AG04450 (cell line): ENCODE measurements at regions of chr17 and their contacts with region 1.

Region 1: DNA sequence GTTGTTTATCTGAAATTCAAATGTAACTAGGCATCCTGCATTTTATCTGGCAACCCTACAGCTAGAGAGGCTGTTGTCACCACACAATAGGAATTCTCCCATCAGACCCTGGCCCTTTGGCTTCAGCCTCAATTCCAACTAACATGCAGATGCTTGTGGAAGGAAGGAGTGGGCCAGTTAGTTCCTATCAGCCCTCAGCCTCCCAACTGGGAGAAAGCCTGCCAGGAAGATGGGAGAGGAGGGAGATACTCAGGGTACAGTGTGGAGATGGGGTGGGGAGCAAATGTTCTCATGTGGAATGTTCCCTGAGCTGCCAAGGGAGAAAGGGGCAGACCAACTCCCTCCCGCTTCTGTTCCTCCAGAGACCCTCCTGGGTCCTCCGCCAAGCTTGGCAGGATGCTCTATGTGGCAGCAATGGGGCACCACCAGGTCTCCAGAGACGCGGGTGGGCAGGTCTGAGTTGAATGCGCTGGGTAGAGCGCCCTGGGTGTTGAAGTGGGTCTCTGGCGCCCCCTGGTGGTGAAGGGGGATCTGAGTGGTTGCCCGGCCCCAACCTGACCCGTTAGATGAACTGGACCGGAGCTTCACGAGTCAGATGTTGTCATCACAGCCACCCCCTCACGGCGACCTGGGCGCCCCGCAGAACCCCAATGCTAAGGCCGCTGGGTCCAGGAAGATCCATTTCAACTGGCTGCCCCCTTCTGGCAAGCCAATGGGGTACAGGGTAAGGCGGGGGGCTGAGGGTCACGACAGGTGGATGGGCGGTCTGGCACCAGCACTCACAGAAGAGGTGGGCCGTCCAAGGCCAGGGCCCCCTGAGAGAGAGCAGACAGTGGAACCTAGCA is 15.2 kb downstream of the GALK1 start:
- DNase-seq: no peak
- H3K4me3 ChIP-seq: 0 out of 2 replicates have a peak overlapping the region, but pooled peaks have one; percentile 10
- H3K27ac ChIP-seq: no peak overlapping the region
- H3K27me3 ChIP-seq: peaks cover 3% of the 10 kb centered on the region
- CTCF ChIP-seq: peak; percentile 87

Region 2: GRCh38 chr17:75460936-75461335 is 288.8 kb before region 1 on chr17:
- CTCF ChIA-PET with region 1: interaction called, 15 read pairs
- POLR2A ChIA-PET with region 1: no interaction called
- DNase-seq: no peak
- H3K4me3 ChIP-seq: no peak overlapping the region
- H3K27ac ChIP-seq: no peak overlapping the region
- H3K27me3 ChIP-seq: no peaks in the 10 kb centered on the region
- CTCF ChIP-seq: no peak

Region 3: DNA sequence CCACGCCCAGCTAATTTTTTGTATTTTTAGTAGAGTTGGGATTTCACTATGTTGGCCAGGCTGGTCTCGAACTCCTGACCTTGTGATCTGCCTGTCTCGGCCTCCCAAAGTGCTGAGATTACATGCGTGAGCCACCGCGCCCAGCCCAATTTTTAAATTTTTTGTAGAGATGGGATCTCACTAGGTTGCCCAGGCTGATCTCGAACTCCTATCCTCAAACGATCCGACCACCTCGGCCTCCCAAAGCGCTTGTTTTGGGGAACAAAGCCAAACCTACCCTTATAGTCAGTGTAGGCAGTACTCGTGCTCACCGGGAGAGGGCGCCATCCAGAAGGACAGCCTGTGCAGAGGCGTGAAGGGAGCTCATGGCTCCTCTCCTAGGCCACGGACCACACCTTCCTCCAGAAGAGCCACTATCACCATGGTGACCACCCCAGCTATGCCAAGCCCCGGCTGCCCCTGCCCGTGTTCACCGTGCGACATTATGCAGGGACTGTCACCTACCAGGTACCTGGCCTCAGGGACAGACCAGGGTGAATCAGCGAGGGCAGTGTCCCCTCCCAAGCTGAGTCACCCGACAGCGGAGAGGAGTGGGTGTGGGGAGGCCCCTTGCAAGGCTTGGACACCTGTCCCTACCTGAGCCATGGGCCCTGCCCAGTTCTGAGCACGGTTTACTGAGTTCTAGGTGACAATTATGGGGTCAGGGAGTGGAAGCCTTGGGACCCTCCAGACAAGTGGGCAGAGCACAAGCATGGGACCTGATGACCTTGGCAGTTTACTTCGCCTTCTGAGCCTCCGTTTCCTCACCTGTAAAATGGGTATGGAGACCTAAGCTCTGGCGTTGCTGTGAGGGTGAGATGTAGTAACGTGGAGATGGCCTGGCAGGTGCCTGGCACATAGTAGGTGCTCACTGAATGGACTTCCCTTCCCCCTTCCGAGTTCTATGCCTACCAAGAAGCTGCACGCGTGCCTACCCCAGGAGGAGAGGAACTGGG is 148.4 kb before region 1 on chr17:
- CTCF ChIA-PET with region 1: interaction called, 14 read pairs
- POLR2A ChIA-PET with region 1: no interaction called
- DNase-seq: no peak
- H3K4me3 ChIP-seq: no peak overlapping the region
- H3K27ac ChIP-seq: no peak overlapping the region
- H3K27me3 ChIP-seq: peaks cover 2% of the 10 kb centered on the region
- CTCF ChIP-seq: peak; percentile 58

Region 4: GRCh38 chr17:75645189-75645888 is 104.4 kb before region 1 on chr17:
- CTCF ChIA-PET with region 1: interaction called, 10 read pairs
- POLR2A ChIA-PET with region 1: no interaction called
- DNase-seq: no peak
- H3K4me3 ChIP-seq: no peak overlapping the region
- H3K27ac ChIP-seq: no peak overlapping the region
- H3K27me3 ChIP-seq: no peaks in the 10 kb centered on the region
- CTCF ChIP-seq: no peak

Region 5: GRCh38 chr17:75673487-75673886 is 76.3 kb before region 1 on chr17:
- CTCF ChIA-PET with region 1: interaction called, 214 read pairs
- POLR2A ChIA-PET with region 1: no interaction called
- DNase-seq: no peak
- H3K4me3 ChIP-seq: no peak overlapping the region
- H3K27ac ChIP-seq: no peak overlapping the region
- H3K27me3 ChIP-seq: no peaks in the 10 kb centered on the region
- CTCF ChIP-seq: no peak

Region 6: DNA sequence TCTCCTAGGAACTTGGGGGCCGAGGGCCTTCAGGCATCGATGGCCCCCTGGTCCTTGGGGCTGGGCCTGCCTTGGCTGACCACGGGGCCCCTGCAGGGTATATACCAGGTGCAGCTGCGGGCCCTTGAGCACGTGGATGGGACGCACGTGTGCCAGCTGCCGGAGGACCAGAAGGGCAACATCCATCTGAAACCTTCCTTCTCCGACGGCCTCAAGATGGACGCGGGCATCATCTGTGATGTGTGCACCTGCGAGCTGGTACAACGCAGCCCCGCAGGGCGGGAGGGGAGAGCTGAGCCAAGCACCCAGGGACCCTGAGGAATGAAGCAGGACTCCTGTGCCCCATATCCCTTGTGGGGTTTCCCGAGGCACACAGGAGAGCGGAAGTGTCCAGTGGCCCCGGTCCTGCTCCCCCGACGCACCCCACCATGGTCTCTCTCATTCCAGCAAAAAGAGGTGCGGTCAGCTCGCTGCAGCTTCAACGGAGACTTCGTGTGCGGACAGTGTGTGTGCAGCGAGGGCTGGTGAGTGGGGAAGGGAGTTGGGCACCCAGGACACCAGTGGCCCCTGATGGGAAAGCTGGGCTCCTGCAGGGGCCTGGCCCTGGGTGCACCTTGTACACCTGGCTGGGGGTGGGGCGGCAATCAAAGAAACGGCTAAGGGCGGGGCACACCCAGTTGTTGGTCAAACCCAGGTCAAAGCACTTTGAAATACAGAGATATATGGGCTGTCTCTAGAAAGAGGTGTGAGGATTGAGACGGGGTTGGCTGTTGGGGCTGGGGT is 17.9 kb before region 1 on chr17:
- CTCF ChIA-PET with region 1: interaction called, 23 read pairs
- POLR2A ChIA-PET with region 1: no interaction called
- DNase-seq: no peak
- H3K4me3 ChIP-seq: no peak overlapping the region
- H3K27ac ChIP-seq: no peak overlapping the region
- H3K27me3 ChIP-seq: peaks cover 12% of the 10 kb centered on the region
- CTCF ChIP-seq: no peak

Region 7: DNA sequence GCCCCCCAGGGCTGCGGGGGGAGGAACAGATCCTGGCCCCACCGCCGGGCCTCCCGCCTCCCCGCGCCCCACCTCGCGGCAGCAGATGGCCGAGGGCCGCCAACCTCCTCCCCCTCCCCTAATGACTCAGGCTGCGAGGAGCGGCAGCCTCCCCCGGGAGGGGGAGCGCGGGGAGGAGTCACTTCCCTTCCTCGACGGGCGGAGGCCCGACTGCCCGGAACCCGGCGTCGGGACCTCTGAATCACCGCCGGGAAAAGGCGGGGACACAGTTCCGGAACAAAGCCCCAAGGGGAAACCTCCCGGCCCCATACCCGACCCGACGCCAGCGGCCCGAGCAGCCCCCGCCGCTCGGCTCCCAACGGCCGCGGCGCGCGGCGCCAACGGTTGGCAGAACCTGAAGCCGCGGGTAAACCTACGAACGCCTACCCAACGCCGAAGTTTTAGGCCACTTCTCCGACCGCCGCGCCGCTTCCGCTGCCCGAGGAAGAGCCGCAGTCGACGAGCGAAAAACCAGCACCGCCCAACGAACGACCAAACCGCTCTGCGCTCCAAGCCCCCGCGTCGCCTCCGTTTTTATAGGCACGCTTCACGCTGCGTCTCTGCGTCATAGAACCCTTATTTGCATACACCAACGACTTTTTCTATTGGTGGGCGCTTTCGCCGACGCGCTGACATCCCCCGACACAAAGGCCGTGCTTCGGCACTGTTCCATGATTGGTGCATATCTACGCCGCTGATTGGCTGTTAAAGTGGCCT is 29.6 kb after region 1 on chr17:
- CTCF ChIA-PET with region 1: interaction called, 7 read pairs
- POLR2A ChIA-PET with region 1: interaction called, 18 read pairs
- DNase-seq: peak; percentile 99
- H3K4me3 ChIP-seq: peak overlapping the region; percentile 90
- H3K27ac ChIP-seq: peak overlapping the region; percentile 99
- H3K27me3 ChIP-seq: no peaks in the 10 kb centered on the region
- CTCF ChIP-seq: no peak

Region 8: GRCh38 chr17:75819108-75820077 is 69.6 kb after region 1 on chr17:
- CTCF ChIA-PET with region 1: no interaction called
- POLR2A ChIA-PET with region 1: no interaction called
- DNase-seq: no peak
- H3K4me3 ChIP-seq: no peak overlapping the region
- H3K27ac ChIP-seq: no peak overlapping the region
- H3K27me3 ChIP-seq: no peaks in the 10 kb centered on the region
- CTCF ChIP-seq: no peak